ENCODE measurements at regions of chr15 and their contacts with region 1.

Region 1: GRCh38 chr15:45664451-45664850 is 29.6 kb downstream of the SQOR start:
- DNase-seq: no peak
- H3K4me3 Mint-ChIP-seq: no peak overlapping the region
- H3K27ac Mint-ChIP-seq: peak overlapping the region; percentile 80
- H3K4me1 Mint-ChIP-seq: peaks cover 25% of the 10 kb centered on the region
- H3K27me3 Mint-ChIP-seq: no peaks in the 10 kb centered on the region

Region 2: DNA sequence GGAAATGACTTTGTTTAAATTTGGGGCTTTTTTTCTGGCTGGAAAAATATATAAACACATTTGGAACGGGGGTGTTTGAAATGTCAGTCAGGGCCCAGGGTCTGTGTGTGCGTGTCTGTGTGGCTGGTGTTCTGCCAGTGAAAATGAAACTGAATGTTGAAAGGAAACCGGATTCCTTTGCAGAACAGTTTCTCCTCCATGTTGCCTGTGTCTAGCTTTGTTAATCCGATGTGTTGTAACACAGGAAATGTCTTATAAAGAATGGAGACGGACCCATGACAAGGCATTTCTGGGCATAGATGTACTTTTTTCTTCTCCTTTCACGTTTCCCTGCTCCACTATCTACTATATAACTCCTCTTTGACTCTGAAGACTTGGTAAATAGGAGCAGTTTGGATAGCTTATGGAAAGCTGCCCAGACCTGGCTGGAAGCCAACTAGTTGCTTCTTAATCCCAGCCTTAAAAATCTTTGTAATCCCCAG is 26.9 kb before region 1 on chr15:
- intact Hi-C with region 1: loop called (anchors 2 kb)
- DNase-seq: peak; percentile 47
- H3K4me3 Mint-ChIP-seq: peak overlapping the region; percentile 79
- H3K27ac Mint-ChIP-seq: peak overlapping the region; percentile 95
- H3K4me1 Mint-ChIP-seq: peaks cover 65% of the 10 kb centered on the region
- H3K27me3 Mint-ChIP-seq: no peaks in the 10 kb centered on the region

Measured in activated T-helper 2 cell treated with anti-CD3 and anti-CD28 coated beads, Interferon-gamma antibody, Interleukin-2, Interleukin-4, amounts not matched to agents 10 μg/mL and 5 μg/mL and 100 μg/mL, durations not matched to agents 14 hours and 24 hours and 36 hours (primary cell).